H1 (cell line): ENCODE measurements at regions of chr20 and their contacts with region 1.

Region 1: DNA sequence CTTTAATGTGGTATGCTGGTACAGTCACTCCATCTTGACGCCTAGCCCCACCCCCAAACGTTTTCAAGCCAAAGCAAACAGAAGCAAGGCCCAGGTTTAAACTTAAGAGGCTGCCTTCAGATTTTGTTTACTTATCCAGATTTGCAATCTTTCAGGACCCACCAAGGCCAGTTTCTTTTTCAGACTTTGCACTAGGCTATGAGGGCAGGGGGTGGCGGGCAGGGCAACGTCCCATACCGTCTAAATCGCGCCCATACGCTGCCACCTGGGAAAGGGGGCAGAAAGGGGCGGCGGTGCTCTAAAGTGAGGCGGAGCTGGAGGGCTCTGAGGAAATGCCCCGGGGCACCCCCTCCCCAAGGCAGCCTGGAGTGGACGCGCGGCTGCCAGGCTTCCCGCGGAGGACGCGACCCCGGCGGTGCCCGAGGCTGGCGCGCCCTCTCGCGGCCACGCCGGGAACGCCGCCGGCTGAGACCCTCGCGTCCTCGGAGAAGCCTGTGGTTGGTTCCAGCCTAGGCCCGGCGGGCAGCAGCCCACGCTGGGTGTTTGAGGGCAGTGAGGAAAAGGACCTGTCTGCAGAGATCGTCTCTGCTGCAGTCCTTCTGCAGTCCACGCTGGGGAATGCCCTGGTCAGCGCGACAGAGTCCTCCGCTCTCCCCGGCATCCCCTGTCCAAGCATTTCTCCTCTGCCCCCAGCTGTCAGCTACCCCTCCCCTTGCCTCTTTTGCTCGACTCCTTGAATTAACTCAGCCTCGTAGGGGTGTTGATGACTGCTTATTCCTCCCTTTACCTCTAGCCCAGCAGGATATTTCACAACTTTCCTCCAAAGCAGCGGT is 129.2 kb upstream of the PRND start:
- DNase-seq: peak in 1 of 2 experiments; percentile 88
- H3K4me3 ChIP-seq: peak overlapping the region in 2 of 4 experiments; percentile 23 to 54; a peak in 5 of 8 replicates
- H3K27ac ChIP-seq: no peak overlapping the region
- H3K4me1 ChIP-seq: peaks cover 0 to 3% (median 1%) of the 10 kb centered on the region in 4 experiments; a peak in 2 of 7 replicates
- H3K27me3 ChIP-seq: peaks cover 0 to 13% (median 6%) of the 10 kb centered on the region in 4 experiments; a peak in 4 of 7 replicates
- CTCF ChIP-seq: peak; percentile 87 to 94 (median 91)
- EP300 ChIP-seq: no peak
- POLR2A ChIP-seq: no peak
- RAD21 ChIP-seq: peak; percentile 94 to 96

Region 2: GRCh38 chr20:4227085-4227821 is 365.3 kb before region 1 on chr20:
- CTCF ChIA-PET with region 1: interaction called, 12 read pairs
- POLR2A ChIA-PET with region 1: no interaction called
- DNase-seq: peak in 1 of 2 experiments; percentile 59
- H3K4me3 ChIP-seq: no peak overlapping the region
- H3K27ac ChIP-seq: no peak overlapping the region
- H3K4me1 ChIP-seq: peaks cover 0 to 5% (median 0%) of the 10 kb centered on the region in 4 experiments; a peak in 2 of 7 replicates
- H3K27me3 ChIP-seq: peaks cover 0 to 6% (median 3%) of the 10 kb centered on the region in 4 experiments; a peak in 5 of 7 replicates
- CTCF ChIP-seq: peak; percentile 73 to 92 (median 79)
- EP300 ChIP-seq: no peak
- POLR2A ChIP-seq: no peak
- RAD21 ChIP-seq: peak; percentile 74 to 83

Region 3: GRCh38 chr20:4233520-4233919 is 359.0 kb before region 1 on chr20:
- CTCF ChIA-PET with region 1: interaction called, 12 read pairs
- POLR2A ChIA-PET with region 1: no interaction called
- DNase-seq: no peak
- H3K4me3 ChIP-seq: no peak overlapping the region
- H3K27ac ChIP-seq: no peak overlapping the region
- H3K4me1 ChIP-seq: peaks cover 0 to 5% (median 0%) of the 10 kb centered on the region in 4 experiments; a peak in 1 of 7 replicates
- H3K27me3 ChIP-seq: peaks cover 0 to 2% (median 0%) of the 10 kb centered on the region in 4 experiments; a peak in 1 of 7 replicates
- CTCF ChIP-seq: peak in 1 of 3 experiments; percentile 17; a peak in 1 of 4 replicates
- EP300 ChIP-seq: no peak
- POLR2A ChIP-seq: no peak
- RAD21 ChIP-seq: no peak; a peak in 1 of 4 replicates

Region 4: DNA sequence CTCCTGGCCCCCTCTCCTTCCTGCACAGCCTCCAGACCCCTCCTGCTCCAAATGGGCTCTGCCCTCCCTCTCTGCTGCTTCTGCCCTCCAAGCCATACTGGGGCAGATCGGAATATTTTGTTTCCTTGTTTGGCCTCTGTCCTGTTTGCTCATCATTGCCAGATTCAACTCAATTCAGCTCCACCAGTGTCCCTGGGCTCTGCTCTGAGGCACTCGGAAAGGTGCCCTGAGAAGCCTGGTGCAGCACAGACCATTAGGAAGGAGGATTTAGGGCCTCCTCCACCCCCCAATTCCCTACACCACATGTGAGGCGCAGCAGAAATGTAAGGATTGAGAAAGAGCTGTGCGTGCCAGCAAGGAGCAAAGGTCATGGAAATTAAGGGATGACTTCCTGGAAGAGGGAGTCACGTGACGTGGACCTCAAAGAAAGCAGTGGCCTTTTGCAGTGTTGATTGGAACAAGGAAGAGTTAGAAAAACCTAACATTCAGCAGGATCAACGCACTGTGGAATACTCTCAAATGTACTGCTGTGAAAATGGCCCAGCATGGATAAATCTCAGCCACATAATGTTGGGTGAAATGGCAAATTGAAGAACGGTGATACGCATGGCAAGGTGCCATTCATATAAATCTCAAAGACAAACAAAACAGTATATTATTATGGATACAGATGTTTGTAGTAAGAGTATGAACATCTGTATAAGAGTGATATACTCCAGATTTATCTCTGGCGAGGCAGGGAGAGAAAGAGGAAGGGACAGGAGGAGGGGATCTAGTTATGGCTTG is 347.6 kb before region 1 on chr20:
- CTCF ChIA-PET with region 1: interaction called, 13 read pairs
- POLR2A ChIA-PET with region 1: no interaction called
- DNase-seq: no peak
- H3K4me3 ChIP-seq: no peak overlapping the region
- H3K27ac ChIP-seq: no peak overlapping the region
- H3K4me1 ChIP-seq: peaks cover 0 to 12% (median 4%) of the 10 kb centered on the region in 4 experiments; a peak in 5 of 7 replicates
- H3K27me3 ChIP-seq: peaks cover 14 to 53% (median 42%) of the 10 kb centered on the region in 4 experiments
- CTCF ChIP-seq: no peak
- EP300 ChIP-seq: no peak
- POLR2A ChIP-seq: no peak
- RAD21 ChIP-seq: no peak

Region 5: DNA sequence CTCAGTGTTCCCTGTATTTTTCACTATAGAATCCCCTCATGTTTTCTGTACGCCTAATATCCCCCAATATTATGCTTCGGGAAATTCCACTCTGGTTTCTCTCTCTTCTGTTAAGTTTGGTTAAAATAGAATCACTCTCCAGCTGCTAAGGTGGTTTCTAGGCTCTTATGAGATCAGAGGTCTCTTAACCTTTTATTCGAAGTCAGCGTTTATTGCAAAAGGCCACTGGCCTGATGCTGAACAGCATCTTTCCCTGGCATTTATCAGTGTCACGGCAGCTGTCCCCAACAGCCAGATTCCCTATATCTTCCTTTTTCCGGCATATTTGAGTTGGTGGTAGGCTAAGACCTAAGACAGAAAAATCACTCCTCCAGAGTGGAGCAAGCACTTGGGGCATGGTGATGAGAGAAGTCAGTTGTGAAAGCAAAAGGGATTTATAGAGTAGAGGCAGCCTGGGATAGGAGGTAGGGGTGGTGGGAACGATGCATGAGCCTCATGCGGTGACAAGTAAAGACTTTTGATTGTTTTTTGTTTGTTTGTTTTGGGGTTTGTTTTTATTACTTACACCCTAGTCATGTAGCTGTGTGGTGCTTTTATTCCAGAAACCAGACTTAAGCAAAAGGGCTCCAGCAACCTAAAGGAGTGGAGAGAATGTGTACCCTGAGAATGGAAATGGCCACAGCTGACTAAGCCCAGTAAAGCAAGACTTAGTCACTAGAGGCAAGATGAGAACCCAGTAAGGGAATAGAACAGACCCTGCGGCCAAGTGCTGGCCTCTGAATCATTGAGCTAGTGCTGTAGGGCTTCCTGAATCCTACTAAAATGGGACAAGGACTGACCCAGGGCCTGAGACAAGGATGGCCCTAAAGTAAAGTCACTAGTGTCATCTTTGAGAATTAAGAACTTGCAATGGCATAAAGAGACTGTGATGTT is 103.9 kb before region 1 on chr20:
- CTCF ChIA-PET with region 1: no interaction called
- POLR2A ChIA-PET with region 1: no interaction called
- DNase-seq: no peak
- H3K4me3 ChIP-seq: no peak overlapping the region
- H3K27ac ChIP-seq: no peak overlapping the region
- H3K4me1 ChIP-seq: peaks cover 0 to 4% (median 0%) of the 10 kb centered on the region in 4 experiments; a peak in 2 of 7 replicates
- H3K27me3 ChIP-seq: no peaks in the 10 kb centered on the region; a peak in 1 of 7 replicates
- CTCF ChIP-seq: no peak
- EP300 ChIP-seq: no peak
- POLR2A ChIP-seq: no peak
- RAD21 ChIP-seq: no peak

Region 6: GRCh38 chr20:4573564-4574355 is 18.8 kb before region 1 on chr20:
- CTCF ChIA-PET with region 1: interaction called, 14 read pairs
- POLR2A ChIA-PET with region 1: no interaction called
- DNase-seq: no peak
- H3K4me3 ChIP-seq: no peak overlapping the region
- H3K27ac ChIP-seq: no peak overlapping the region
- H3K4me1 ChIP-seq: peaks cover 0 to 3% (median 1%) of the 10 kb centered on the region in 4 experiments; a peak in 2 of 7 replicates
- H3K27me3 ChIP-seq: peaks cover 0 to 1% (median 0%) of the 10 kb centered on the region in 4 experiments; a peak in 1 of 7 replicates
- CTCF ChIP-seq: no peak
- EP300 ChIP-seq: no peak
- POLR2A ChIP-seq: no peak
- RAD21 ChIP-seq: no peak

Region 7: DNA sequence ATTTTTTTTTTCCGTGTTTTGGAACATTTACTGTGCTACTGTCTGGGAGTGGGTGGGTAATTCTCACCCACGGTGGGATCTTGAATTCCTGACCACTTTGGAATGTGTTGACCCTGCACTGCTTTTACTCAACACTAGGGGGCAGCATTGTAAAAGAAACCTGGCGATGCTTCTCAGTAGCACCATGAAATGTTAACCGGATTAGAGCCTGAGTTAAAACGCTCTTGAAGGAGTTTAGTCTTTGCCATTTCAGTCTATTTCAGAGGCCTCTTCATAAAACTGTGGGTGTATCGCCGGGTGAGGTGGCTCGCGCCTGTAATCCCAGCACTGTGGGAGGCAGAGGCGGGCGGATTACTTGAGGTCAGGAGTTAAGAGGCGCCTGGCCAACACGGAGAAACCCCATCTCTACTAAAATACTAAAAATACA is 14.8 kb after region 1 on chr20:
- CTCF ChIA-PET with region 1: interaction called, 22 read pairs
- POLR2A ChIA-PET with region 1: no interaction called
- DNase-seq: peak; percentile 15 to 69
- H3K4me3 ChIP-seq: no peak overlapping the region
- H3K27ac ChIP-seq: no peak overlapping the region
- H3K4me1 ChIP-seq: no peaks in the 10 kb centered on the region; a peak in 1 of 7 replicates
- H3K27me3 ChIP-seq: no peaks in the 10 kb centered on the region
- CTCF ChIP-seq: peak; percentile 22 to 84 (median 82)
- EP300 ChIP-seq: no peak
- POLR2A ChIP-seq: no peak
- RAD21 ChIP-seq: peak; percentile 97